SK-MEL-5 (cell line): ENCODE measurements at regions of chr6 and their contacts with region 1.

Region 1: GRCh38 chr6:52284460-52285176 is at the start of gene MCM3:
- DNase-seq: peak; percentile 99
- total RNA-seq, gene MCM3: 109 and 113 TPM in 2 replicates

Region 2: DNA sequence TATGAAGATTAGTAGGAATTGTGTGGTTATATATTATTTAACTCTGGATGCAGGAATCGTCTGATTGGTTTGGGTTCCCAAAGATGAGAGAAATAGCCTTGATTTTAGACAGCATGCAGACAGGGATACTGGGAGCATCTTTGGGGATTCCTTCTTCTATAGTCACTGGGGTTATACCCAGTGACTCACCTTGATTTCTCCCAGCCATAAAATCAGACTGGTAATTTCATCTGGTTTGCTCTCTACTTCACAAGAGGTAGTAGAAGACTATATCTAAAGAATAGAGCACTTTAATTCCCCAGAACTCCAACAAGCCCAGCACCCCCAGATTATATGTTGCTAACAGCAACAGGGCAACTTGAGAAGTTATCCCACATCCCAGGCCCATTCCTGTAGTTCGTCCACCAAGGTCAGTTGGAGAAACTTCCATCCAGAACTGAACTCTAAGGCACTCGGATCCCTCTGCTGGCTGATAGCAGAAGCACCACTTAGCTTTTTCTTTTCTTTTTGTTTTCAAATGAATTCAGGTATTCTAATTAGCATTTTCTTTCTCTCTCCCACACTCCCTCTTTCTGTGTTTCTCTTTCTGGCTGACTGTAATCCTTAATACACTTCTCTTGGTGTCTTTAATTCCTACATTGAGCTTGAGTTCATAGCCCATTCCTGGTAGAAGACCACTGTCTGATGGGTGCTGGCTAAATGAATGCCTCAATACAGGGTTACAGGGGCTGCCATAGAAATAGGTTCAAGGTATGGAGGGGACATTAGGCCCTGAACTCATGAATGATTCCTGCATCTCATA is 115.1 kb after region 1 on chr6:
- in situ Hi-C with region 1: loop called (anchors 25 kb)
- DNase-seq: peak; percentile 76

Region 3: DNA sequence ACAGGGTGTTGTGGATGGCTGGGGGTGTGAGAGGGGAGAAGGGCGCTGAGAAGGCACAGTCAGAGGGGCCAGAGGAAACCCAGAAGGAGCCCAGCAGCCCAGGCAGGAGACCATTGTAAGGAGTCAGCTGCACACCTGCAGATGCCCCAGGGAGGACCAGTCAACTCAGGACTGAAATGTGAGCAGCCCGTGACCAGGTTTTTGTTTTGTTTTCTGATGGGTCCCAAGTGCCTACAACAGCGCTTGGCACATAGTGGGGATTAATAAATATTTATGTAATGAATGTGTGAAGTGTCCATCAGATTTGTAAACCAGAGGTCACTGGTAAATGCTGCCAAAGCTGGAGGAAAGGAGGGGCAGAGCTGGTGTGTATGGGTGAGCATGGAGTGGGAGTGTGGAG is 262.1 kb after region 1 on chr6:
- in situ Hi-C with region 1: no loop called
- DNase-seq: no peak

Region 4: DNA sequence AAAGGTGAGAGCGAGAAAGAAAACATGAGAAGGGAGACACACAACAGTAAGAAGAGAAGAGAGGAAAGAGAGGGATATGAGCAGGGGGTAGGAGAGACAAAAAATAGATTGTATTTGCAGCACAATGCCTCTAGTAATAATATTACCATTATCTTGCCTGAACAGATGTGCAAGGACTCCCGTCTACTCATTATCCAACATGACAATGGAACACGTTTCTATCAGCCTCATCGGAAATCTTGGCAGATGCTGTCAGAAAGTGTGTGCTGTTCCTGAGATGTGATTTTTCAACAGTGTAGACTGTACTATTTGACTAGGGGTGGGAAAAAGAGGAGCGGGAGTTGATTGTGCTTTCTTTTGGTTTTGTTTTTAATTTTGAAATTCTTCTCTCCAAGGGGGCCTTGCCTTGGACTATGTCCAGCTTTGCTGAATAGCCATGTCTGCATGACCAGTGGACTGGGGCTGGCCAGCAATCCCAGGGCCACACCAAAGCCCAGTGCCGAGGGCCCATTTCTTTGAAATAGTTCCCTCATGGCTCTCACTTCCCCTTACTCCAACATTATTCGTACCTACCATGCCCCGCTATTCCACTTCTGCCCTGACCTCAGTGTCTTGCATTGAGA is 303.6 kb after region 1 on chr6:
- in situ Hi-C with region 1: no loop called
- DNase-seq: no peak